ENCODE measurements at regions of chr9 and their contacts with region 1.

Region 1: GRCh38 chr9:123225374-123225813 is 43.0 kb downstream of the STRBP start:
- ATAC-seq: peak in 4 of 8 experiments; percentile 56 to 96 (median 76)
- H3K4me3 ChIP-seq: no peak overlapping the region
- H3K27ac ChIP-seq: no peak overlapping the region
- H3K4me1 ChIP-seq: no peaks in the 10 kb centered on the region

Region 2: GRCh38 chr9:123081824-123082223 is 143.6 kb before region 1 on chr9:
- in situ Hi-C with region 1: loop called in 1 of 9 experiments (anchors 25 kb)
- ATAC-seq: peak in 4 of 8 experiments; percentile 28 to 77 (median 72)
- H3K4me3 ChIP-seq: no peak overlapping the region
- H3K27ac ChIP-seq: no peak overlapping the region
- H3K4me1 ChIP-seq: no peaks in the 10 kb centered on the region

Region 3: GRCh38 chr9:123102375-123103110 is 122.9 kb before region 1 on chr9:
- in situ Hi-C with region 1: loop called in 2 of 9 experiments (anchors 10 to 25 kb)
- ATAC-seq: peak in 6 of 8 experiments; percentile 20 to 95 (median 36)
- H3K4me3 ChIP-seq: no peak overlapping the region
- H3K27ac ChIP-seq: no peak overlapping the region
- H3K4me1 ChIP-seq: no peaks in the 10 kb centered on the region

Region 4: DNA sequence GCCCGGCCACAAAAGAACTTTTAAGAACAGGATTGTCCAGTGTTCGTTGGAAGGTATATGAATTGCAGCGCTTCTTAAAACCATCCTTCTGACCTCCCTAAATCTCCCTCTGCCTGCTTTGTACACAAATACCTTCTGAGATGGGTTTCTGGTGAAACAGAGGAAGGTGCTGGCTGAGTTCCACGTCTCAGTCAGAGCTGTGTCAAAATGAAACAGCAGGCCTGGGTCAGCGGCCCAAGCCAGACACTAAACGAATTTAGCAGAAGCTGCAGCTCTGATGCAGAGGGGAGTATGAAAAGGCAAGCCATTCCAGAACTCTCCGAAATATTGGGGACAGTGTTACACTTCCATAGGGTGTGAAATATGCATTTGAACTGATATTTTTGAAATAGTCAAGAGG is 92.8 kb after region 1 on chr9:
- in situ Hi-C with region 1: no loop called
- ATAC-seq: no peak
- H3K4me3 ChIP-seq: no peak overlapping the region
- H3K27ac ChIP-seq: no peak overlapping the region
- H3K4me1 ChIP-seq: no peaks in the 10 kb centered on the region

Region 5: DNA sequence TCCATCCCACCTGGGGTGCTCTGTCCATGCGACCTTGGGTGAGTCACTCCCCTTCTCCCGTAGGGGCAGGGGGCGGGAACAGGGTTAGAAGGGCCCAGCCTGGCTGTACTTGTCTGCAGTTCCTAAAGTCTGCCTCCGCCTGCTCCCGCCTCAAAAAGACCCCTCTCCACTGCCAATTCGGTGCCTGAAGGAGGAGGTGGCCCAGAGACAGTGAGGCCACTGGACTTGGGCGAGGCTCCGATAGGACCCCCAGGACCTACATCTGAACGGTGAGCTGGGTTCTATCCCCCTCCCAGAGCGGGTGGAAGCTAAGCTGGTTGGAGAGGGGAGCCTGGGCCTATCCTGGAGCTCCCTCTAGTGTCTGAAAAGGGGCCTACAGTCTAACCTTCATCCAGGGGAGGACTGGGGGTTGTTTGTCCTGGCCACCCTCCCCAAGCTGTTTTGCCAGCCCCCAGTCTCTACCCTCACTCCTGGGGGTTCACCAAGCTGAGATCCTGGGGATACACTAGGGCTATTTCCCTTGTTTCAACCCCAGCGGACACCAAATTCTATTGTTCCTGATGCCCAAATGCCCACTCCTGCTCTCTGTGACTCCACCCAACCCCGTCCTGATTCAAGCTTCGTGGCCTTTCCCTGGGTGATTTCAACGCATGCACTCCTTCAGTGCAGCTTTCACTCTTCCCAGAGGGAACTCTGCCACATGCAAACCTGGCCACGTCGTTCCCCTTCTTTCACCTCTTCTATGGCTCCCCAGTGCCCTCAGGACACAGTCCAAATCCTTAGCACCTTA is 124.5 kb after region 1 on chr9:
- in situ Hi-C with region 1: loop called in 1 of 9 experiments (anchors 25 kb)
- ATAC-seq: peak; percentile 67 to 88 (median 77)
- H3K4me3 ChIP-seq: no peak overlapping the region
- H3K27ac ChIP-seq: no peak overlapping the region
- H3K4me1 ChIP-seq: peaks cover 0 to 2% of the 10 kb centered on the region in 2 donors